ENCODE measurements at regions of chr4 and their contacts with region 1.

Region 1: GRCh38 chr4:17810260-17811077 is at the starts of genes DCAF16 and NCAPG:
- DNase-seq: peak; percentile 99
- ATAC-seq: peak; percentile 97
- total RNA-seq, gene DCAF16: 24.0 to 27.5 TPM
- total RNA-seq, gene NCAPG: 2.8 to 4.4 TPM

Region 2: DNA sequence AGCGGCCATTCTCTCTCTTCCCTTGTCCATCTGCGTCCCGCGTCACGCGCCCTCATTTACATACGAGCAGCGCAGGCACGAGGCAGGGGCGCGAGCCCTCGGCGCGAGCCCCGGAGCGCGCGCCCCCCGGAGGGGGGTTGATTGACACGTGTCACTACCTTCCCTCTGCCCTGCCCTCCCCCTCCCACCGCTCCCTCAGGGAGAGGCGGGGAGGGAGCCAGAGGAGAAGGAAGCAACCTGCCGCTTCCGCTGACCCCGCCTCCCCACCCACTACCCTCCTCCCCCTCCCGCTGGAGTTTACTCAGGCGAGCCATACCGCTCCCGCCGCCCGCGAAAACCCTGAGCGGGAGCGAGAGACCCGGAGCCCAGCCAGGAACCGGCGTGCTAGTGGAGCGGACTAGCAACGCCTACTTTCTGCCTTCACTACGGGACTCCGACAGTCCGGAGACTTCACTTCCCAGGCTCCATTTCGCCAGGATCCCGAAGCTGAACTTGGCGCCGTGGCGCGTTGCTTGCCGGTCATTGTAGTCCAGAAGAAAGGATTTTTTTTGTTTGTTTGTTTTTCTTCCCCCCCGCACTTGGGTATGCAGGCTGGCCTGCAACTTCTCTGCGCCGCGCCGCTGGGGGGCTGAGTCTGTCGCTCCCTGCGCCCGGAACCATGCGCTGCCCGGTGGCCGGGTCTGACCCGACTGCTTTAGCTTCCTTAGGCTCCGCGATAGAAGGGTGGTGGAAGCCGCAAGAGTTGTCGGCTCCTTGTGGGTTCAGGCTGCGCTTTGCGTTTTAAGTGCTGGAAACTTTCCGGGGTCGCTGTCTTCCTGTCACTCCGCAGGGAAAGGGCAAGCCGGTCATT is 211.5 kb after region 1 on chr4 and contains the start of gene LCORL:
- intact Hi-C with region 1: loop called in 1 of 2 experiments (anchors 10 kb)
- DNase-seq: peak; percentile 94 to 96
- ATAC-seq: peak; percentile 89
- total RNA-seq, gene LCORL: 19.1 to 19.3 TPM

Region 3: GRCh38 chr4:18039113-18039512 is 228.6 kb after region 1 on chr4:
- intact Hi-C with region 1: no loop called
- DNase-seq: no peak
- ATAC-seq: no peak